Ascending aorta (tissue), 2 donors: ENCODE measurements at regions of chr3 and their contacts with region 1.

Region 1: DNA sequence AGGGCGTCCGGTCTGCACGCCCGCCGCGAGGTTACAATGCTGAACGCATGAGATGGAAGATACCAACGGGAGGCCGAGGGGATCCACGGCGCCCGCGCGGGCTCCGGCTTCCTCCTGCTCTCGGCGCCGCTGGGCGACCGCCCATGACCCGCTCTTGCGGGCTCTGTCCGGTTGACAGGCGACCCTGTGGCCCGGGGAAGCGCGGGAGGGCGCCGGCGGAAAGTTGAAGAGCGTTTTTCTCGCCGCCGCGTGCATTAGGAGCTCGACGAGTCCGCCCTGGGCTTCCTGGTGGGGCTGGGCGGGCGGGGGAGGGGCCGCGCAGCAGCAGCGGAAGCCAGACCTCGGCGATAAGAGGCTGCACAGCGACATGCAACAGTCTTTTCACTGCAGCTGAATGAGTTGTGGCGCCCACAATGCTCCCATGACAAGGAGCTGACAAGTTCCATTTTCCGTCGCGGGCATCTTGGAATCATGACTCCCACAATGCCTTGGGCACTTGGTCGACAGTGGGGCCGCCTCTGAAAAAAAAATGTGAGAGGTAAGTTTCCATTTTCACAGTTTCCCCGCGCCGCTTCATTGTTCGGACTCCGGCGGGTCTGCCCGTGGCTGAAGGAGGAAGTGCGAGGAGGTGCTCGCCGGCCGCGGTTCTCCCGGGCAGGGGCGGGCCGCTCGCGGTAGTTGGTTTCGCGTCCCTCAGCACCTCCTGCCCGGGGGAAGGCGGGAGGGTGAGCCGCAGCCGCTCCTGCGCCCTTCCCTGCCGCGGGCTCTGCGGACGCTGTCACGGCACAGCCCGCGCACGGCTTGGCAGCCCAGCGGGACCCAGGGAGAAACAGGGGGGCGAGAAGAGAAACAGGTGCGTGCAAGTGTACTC is at the start of gene MBNL1:
- DNase-seq: peak; percentile 61 to 90
- H3K4me3 ChIP-seq: peak within 1 kb of the TSS; percentile 76 to 86
- H3K27ac ChIP-seq: peak within 1 kb of the TSS; percentile 94 to 99
- H3K4me1 ChIP-seq: peaks cover 0 to 22% of the 10 kb centered on the region in 2 donors
- H3K27me3 ChIP-seq: no peaks in the 10 kb centered on the region
- CTCF ChIP-seq: no peak
- total RNA-seq, gene MBNL1: 350 TPM

Region 2: GRCh38 chr3:152026033-152026556 is 242.7 kb before region 1 on chr3:
- intact Hi-C with region 1: loop called (anchors 5 kb)
- DNase-seq: no peak
- H3K4me3 ChIP-seq: no peak overlapping the region
- H3K27ac ChIP-seq: no peak overlapping the region
- H3K4me1 ChIP-seq: peaks cover 0 to 11% of the 10 kb centered on the region in 2 donors
- H3K27me3 ChIP-seq: no peaks in the 10 kb centered on the region
- CTCF ChIP-seq: peak in 2 of 3 experiments; percentile 39 to 43

Region 3: GRCh38 chr3:152071924-152072323 is 196.9 kb before region 1 on chr3:
- intact Hi-C with region 1: loop called (anchors 5 kb)
- DNase-seq: no peak
- H3K4me3 ChIP-seq: no peak overlapping the region
- H3K27ac ChIP-seq: no peak overlapping the region
- H3K4me1 ChIP-seq: peaks cover 0 to 3% of the 10 kb centered on the region in 2 donors
- H3K27me3 ChIP-seq: no peaks in the 10 kb centered on the region
- CTCF ChIP-seq: peak; percentile 37 to 48 (median 45)

Region 4: DNA sequence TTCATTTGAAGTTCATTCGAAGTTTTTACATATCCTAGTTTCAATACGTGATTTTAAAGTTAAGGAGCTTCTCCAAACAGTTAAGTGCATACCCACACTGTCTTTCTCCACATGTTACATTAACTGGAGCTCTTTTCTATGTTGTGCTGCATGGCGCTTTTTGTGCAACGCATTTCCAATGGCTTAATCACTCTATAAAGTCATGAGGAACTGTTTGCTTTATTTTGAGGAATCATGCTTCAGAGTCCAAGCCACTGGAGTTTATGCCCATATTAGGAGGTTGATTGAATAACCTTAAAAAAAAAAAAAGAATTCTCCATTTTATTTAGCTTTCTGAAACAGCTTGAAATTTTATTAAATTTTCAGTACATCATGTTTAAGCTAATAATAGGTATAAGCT is 109.5 kb before region 1 on chr3:
- intact Hi-C with region 1: loop called (anchors 5 kb)
- DNase-seq: peak in 1 of 2 donors; percentile 78
- H3K4me3 ChIP-seq: no peak overlapping the region
- H3K27ac ChIP-seq: peak overlapping the region; percentile 70 to 73
- H3K4me1 ChIP-seq: peaks cover 3 to 39% of the 10 kb centered on the region in 2 donors
- H3K27me3 ChIP-seq: no peaks in the 10 kb centered on the region
- CTCF ChIP-seq: no peak

Region 5: GRCh38 chr3:152199102-152199840 is 69.5 kb before region 1 on chr3:
- intact Hi-C with region 1: loop called (anchors 2 kb)
- DNase-seq: no peak
- H3K4me3 ChIP-seq: peak overlapping the region in 1 of 2 donors; percentile 58
- H3K27ac ChIP-seq: peak overlapping the region; percentile 89 to 90
- H3K4me1 ChIP-seq: peaks cover 8 to 42% of the 10 kb centered on the region in 2 donors
- H3K27me3 ChIP-seq: no peaks in the 10 kb centered on the region
- CTCF ChIP-seq: no peak

Region 6: GRCh38 chr3:152298393-152299242 is 29.8 kb after region 1 on chr3:
- intact Hi-C with region 1: loop called (anchors 2 kb)
- DNase-seq: peak in 1 of 2 donors; percentile 84
- H3K4me3 ChIP-seq: peak overlapping the region; percentile 49 to 52
- H3K27ac ChIP-seq: peak overlapping the region; percentile 77 to 83
- H3K4me1 ChIP-seq: peaks cover 8 to 51% of the 10 kb centered on the region in 2 donors
- H3K27me3 ChIP-seq: no peaks in the 10 kb centered on the region
- CTCF ChIP-seq: no peak

Region 7: GRCh38 chr3:152416808-152417580 is 148.2 kb after region 1 on chr3:
- intact Hi-C with region 1: no loop called
- DNase-seq: no peak
- H3K4me3 ChIP-seq: no peak overlapping the region
- H3K27ac ChIP-seq: peak overlapping the region; percentile 15 to 56
- H3K4me1 ChIP-seq: peaks cover 6 to 28% of the 10 kb centered on the region in 2 donors
- H3K27me3 ChIP-seq: no peaks in the 10 kb centered on the region
- CTCF ChIP-seq: no peak